ENCODE measurements at regions of chr2 and their contacts with region 1.

Region 1: GRCh38 chr2:111698743-111699554 is 185.0 kb downstream of the ANAPC1 start:
- DNase-seq: peak; percentile 71
- H3K4me3 Mint-ChIP-seq: peak overlapping the region; percentile 77
- H3K27ac Mint-ChIP-seq: peak overlapping the region; percentile 93
- H3K4me1 Mint-ChIP-seq: peaks cover 63% of the 10 kb centered on the region
- H3K27me3 Mint-ChIP-seq: peaks cover 4% of the 10 kb centered on the region

Region 2: GRCh38 chr2:111032721-111033429 is 666.1 kb before region 1 on chr2:
- intact Hi-C with region 1: no loop called
- DNase-seq: no peak
- H3K4me3 Mint-ChIP-seq: no peak overlapping the region
- H3K27ac Mint-ChIP-seq: no peak overlapping the region
- H3K4me1 Mint-ChIP-seq: peaks cover 27% of the 10 kb centered on the region
- H3K27me3 Mint-ChIP-seq: peaks cover 48% of the 10 kb centered on the region

Region 3: GRCh38 chr2:111625766-111626616 is 73.0 kb before region 1 on chr2:
- intact Hi-C with region 1: loop called (anchors 1 kb)
- DNase-seq: no peak
- H3K4me3 Mint-ChIP-seq: peak overlapping the region; percentile 52
- H3K27ac Mint-ChIP-seq: peak overlapping the region; percentile 92
- H3K4me1 Mint-ChIP-seq: peaks cover 42% of the 10 kb centered on the region
- H3K27me3 Mint-ChIP-seq: peaks cover 2% of the 10 kb centered on the region

Measured in activated T-helper 1 cell treated with anti-CD3 and anti-CD28 coated beads, Interleukin-12 subunit alpha, Interleukin-12 subunit beta, Interleukin-2, Interleukin-4 antibody, amounts not matched to agents 30 ng/mL and 10 ng/mL and 1 ng/mL, durations not matched to agents 14 hours and 24 hours and 36 hours (primary cell).